KBM-7 (cell line): ENCODE measurements at regions of chr4 and their contacts with region 1.

Region 1: DNA sequence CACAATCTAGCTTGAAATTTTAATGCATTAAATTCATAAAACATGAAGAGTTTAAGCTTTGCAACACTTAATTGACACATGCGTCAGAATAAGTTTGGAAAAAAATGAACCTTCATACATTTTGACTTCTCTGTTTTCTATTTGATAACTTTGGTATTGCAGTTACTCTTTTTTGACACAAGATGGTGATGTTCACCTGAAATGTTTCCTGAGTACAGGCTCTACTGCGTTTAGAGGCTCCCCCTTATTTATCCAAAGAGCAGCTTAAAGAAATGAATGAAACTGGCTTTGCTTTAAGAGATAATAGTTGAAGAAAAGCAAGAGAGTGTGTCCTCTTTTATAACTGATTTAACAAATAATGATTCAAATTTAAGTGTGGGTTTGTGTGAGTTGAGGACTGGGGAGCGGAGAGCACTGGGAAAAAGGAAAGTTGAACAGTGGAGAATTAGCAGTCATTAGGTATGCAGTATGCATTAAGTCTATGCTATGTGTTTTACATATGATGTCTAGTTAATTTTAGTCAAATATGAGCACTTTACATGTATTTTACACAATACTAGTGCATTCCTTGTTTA is 180.6 kb upstream of the NUDT6 start:
- DNase-seq: peak; percentile 56

Region 2: GRCh38 chr4:123649645-123650391 is 546.8 kb after region 1 on chr4:
- in situ Hi-C with region 1: loop called (anchors 25 kb)
- DNase-seq: no peak